IMR-90 (cell line): ENCODE measurements at regions of chr5 and their contacts with region 1.

Region 1: DNA sequence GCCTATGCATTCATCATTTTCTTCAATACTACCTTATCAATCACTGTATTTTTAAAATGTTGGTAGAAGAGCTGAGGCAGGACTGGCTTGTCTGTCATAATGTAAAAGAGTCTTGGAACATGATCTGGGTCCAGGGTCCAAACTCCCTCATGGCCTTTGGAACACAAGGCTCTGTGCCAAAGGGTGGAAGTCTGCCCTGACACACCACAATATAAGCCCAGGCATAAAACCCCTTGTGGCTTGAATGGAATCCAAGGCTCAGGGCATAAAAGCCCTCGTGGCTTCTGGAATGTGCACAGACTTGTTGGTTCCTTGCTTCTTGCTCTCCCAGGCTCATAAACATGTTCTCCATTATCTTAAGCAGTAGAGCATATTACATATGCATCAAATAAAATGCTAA is 48.0 kb downstream of the GABRB2 start:
- DNase-seq: no peak
- ATAC-seq: no peak
- H3K4me3 ChIP-seq: no peak overlapping the region
- H3K27ac ChIP-seq: no peak overlapping the region
- H3K4me1 ChIP-seq: no peaks in the 10 kb centered on the region
- H3K27me3 ChIP-seq: no peaks in the 10 kb centered on the region
- CTCF ChIP-seq: no peak
- POLR2A ChIP-seq: no peak
- RAD21 ChIP-seq: no peak

Region 2: GRCh38 chr5:162637481-162637880 is 1139.0 kb after region 1 on chr5:
- CTCF ChIA-PET with region 1: no interaction called
- POLR2A ChIA-PET with region 1: no interaction called
- dilution Hi-C with region 1: no loop called
- in situ Hi-C with region 1: no loop called
- intact Hi-C with region 1: loop called (anchors 5 kb)
- DNase-seq: no peak
- ATAC-seq: no peak
- H3K4me3 ChIP-seq: no peak overlapping the region
- H3K27ac ChIP-seq: no peak overlapping the region
- H3K4me1 ChIP-seq: no peaks in the 10 kb centered on the region
- H3K27me3 ChIP-seq: no peaks in the 10 kb centered on the region
- CTCF ChIP-seq: no peak
- POLR2A ChIP-seq: no peak
- RAD21 ChIP-seq: no peak